Dendritic cell treated with granulocyte-macrophage colony-stimulating factor and Interleukin-4, amounts not matched to agents 40 ng/mL and 50 ng/mL, for 4 days (primary cell): ENCODE measurements at regions of chr6 and their contacts with region 1.

Region 1: GRCh38 chr6:149373511-149373910 is 26.6 kb upstream of the SUMO4 start:
- H3K4me3 Mint-ChIP-seq: no peak overlapping the region
- H3K27ac Mint-ChIP-seq: peak overlapping the region; percentile 71
- H3K4me1 Mint-ChIP-seq: peaks cover 56% of the 10 kb centered on the region
- H3K27me3 Mint-ChIP-seq: no peaks in the 10 kb centered on the region

Region 2: GRCh38 chr6:149324428-149324827 is 49.1 kb before region 1 on chr6:
- intact Hi-C with region 1: loop called (anchors 10 kb)
- H3K4me3 Mint-ChIP-seq: no peak overlapping the region
- H3K27ac Mint-ChIP-seq: peak overlapping the region; percentile 30
- H3K4me1 Mint-ChIP-seq: peaks cover 47% of the 10 kb centered on the region
- H3K27me3 Mint-ChIP-seq: no peaks in the 10 kb centered on the region

Region 3: GRCh38 chr6:149405823-149406765 is 32.6 kb after region 1 on chr6:
- intact Hi-C with region 1: loop called (anchors 5 kb)
- H3K4me3 Mint-ChIP-seq: no peak overlapping the region
- H3K27ac Mint-ChIP-seq: peak overlapping the region; percentile 10
- H3K4me1 Mint-ChIP-seq: peaks cover 20% of the 10 kb centered on the region
- H3K27me3 Mint-ChIP-seq: no peaks in the 10 kb centered on the region

Region 4: GRCh38 chr6:149450679-149451360 is 77.3 kb after region 1 on chr6:
- intact Hi-C with region 1: no loop called
- H3K4me3 Mint-ChIP-seq: peak overlapping the region; percentile 82
- H3K27ac Mint-ChIP-seq: peak overlapping the region; percentile 87
- H3K4me1 Mint-ChIP-seq: peaks cover 65% of the 10 kb centered on the region
- H3K27me3 Mint-ChIP-seq: no peaks in the 10 kb centered on the region

Region 5: GRCh38 chr6:149471801-149472200 is 98.3 kb after region 1 on chr6:
- intact Hi-C with region 1: no loop called
- H3K4me3 Mint-ChIP-seq: no peak overlapping the region
- H3K27ac Mint-ChIP-seq: peak overlapping the region; percentile 31
- H3K4me1 Mint-ChIP-seq: peaks cover 46% of the 10 kb centered on the region
- H3K27me3 Mint-ChIP-seq: no peaks in the 10 kb centered on the region